ENCODE measurements at regions of chr12 and their contacts with region 1.

Region 1: GRCh38 chr12:62934799-62935674 is at the start of gene PPM1H:
- DNase-seq: peak; percentile 63
- H3K4me3 ChIP-seq: peak within 1 kb of the TSS; percentile 29 to 62 (median 57)
- H3K27ac ChIP-seq: no peak within 1 kb of the TSS
- H3K4me1 ChIP-seq: peaks cover 8% of the 10 kb centered on the region
- H3K27me3 ChIP-seq: peaks cover 15 to 23% of the 10 kb centered on the region in 2 experiments
- CTCF ChIP-seq: peak in 1 of 2 donors; percentile 52
- POLR2A ChIP-seq: no peak
- total RNA-seq, gene PPM1H: 4.9 and 7.2 TPM in 2 replicates

Region 2: DNA sequence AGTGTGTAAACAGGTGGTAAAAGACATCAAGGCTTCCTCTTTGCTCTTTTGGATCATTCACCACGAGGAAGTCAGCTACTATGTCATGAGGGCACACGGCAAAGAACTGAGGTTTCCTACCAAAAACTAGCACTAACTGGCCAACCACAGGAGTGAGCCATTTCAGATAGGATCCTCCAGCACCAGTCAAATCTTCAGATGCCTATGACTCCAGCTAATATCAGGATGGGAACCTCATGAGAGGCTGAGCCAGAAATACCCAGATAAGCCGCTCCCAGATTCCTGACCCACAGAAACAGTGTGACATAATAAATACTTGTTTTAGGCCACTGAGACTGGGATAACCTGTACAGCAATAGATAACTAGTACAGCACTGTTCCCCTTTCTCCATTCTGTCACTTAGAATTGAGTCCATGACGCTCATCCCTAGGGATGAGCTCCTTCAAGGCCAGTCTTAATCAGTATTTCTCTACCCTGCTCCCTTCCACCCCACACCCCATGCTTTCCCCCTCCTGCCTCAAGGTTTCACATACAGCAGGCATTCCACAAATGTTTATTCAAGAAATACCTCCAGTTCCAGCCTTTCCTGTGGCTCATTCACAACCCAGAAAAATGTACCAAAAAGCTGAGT is 68.5 kb before region 1 on chr12:
- CTCF ChIA-PET with region 1: interaction called, 5 read pairs
- POLR2A ChIA-PET with region 1: no interaction called
- dilution Hi-C with region 1: no loop called
- intact Hi-C with region 1: loop called (anchors 2 kb)
- DNase-seq: peak; percentile 65
- H3K4me3 ChIP-seq: no peak overlapping the region
- H3K27ac ChIP-seq: peak overlapping the region; percentile 74
- H3K4me1 ChIP-seq: peaks cover 36% of the 10 kb centered on the region
- H3K27me3 ChIP-seq: no peaks in the 10 kb centered on the region
- CTCF ChIP-seq: no peak
- POLR2A ChIP-seq: no peak

Region 3: GRCh38 chr12:62903151-62903550 is 31.9 kb before region 1 on chr12:
- CTCF ChIA-PET with region 1: interaction called, 4 read pairs
- POLR2A ChIA-PET with region 1: no interaction called
- dilution Hi-C with region 1: no loop called
- intact Hi-C with region 1: loop called (anchors 1 kb)
- DNase-seq: peak; percentile 94
- H3K4me3 ChIP-seq: no peak overlapping the region
- H3K27ac ChIP-seq: peak overlapping the region; percentile 64
- H3K4me1 ChIP-seq: peaks cover 11% of the 10 kb centered on the region
- H3K27me3 ChIP-seq: peaks cover 0 to 3% of the 10 kb centered on the region in 2 experiments
- CTCF ChIP-seq: no peak
- POLR2A ChIP-seq: no peak

Region 4: DNA sequence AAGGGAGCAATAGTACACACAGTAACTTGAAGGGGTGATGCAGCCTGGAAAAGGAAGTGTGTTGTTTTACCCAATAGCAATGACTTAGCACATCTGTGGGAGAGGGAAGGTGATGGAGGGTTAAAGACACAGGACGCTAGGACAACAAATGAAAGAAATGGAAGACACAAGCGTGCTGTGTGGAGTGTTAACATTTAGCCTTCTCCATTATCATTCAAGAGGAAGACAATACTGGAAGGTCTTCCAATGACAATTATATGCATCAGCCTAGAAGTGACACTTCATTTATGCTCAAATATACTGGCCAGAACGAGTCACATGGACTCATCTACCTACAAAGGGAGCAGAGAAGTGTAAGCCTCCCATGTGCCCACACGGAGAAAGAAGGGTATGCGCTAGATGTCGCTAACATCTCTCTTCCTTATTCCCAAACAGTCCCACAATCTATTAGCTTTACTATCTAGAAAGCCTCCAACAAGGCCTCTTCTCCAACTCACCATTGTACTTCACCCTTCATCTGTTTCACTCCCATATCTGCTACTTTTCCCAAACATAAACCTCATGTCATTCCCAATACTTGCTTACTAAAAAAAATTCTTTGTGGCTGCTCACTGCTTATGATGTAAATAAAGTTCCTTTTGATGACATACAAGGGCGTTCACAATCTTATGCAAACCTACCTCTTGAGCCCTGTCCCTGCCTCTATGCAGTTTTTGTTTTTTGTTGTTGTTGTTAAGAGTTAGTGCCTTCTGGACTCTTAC is 20.4 kb before region 1 on chr12:
- CTCF ChIA-PET with region 1: interaction called, 6 read pairs
- POLR2A ChIA-PET with region 1: no interaction called
- dilution Hi-C with region 1: no loop called
- intact Hi-C with region 1: loop called (anchors 1 kb)
- DNase-seq: no peak
- H3K4me3 ChIP-seq: no peak overlapping the region
- H3K27ac ChIP-seq: no peak overlapping the region
- H3K4me1 ChIP-seq: peaks cover 2% of the 10 kb centered on the region
- H3K27me3 ChIP-seq: peaks cover 0 to 18% of the 10 kb centered on the region in 2 experiments
- CTCF ChIP-seq: no peak
- POLR2A ChIP-seq: no peak

Region 5: GRCh38 chr12:63989301-63989845 is 1054.3 kb after region 1 on chr12:
- CTCF ChIA-PET with region 1: no interaction called
- POLR2A ChIA-PET with region 1: no interaction called
- dilution Hi-C with region 1: no loop called
- intact Hi-C with region 1: no loop called
- DNase-seq: peak; percentile 47
- H3K4me3 ChIP-seq: no peak overlapping the region
- H3K27ac ChIP-seq: no peak overlapping the region
- H3K4me1 ChIP-seq: no peaks in the 10 kb centered on the region
- H3K27me3 ChIP-seq: no peaks in the 10 kb centered on the region
- CTCF ChIP-seq: no peak
- POLR2A ChIP-seq: no peak

Measured in endothelial cell of umbilical vein (primary cell).